ENCODE measurements at regions of chr9 and their contacts with region 1.

Region 1: GRCh38 chr9:18490635-18491370 is 16.9 kb downstream of the ADAMTSL1 start:
- DNase-seq: peak; percentile 96
- H3K4me3 ChIP-seq: peak overlapping the region in 2 of 3 experiments; percentile 8 to 25
- H3K27ac ChIP-seq: peak overlapping the region; percentile 96
- H3K4me1 ChIP-seq: peaks cover 50% of the 10 kb centered on the region
- H3K27me3 ChIP-seq: no peaks in the 10 kb centered on the region
- CTCF ChIP-seq: no peak
- POLR2A ChIP-seq: peak; percentile 31

Region 2: GRCh38 chr9:18238254-18238653 is 252.5 kb before region 1 on chr9:
- CTCF ChIA-PET with region 1: interaction called, 4 read pairs
- POLR2A ChIA-PET with region 1: no interaction called
- dilution Hi-C with region 1: no loop called
- intact Hi-C with region 1: loop called (anchors 1 kb)
- DNase-seq: peak; percentile 97
- H3K4me3 ChIP-seq: peak overlapping the region in 1 of 3 experiments; percentile 27
- H3K27ac ChIP-seq: peak overlapping the region; percentile 93
- H3K4me1 ChIP-seq: peaks cover 43% of the 10 kb centered on the region
- H3K27me3 ChIP-seq: no peaks in the 10 kb centered on the region
- CTCF ChIP-seq: no peak
- POLR2A ChIP-seq: no peak

Region 3: GRCh38 chr9:18331808-18332209 is 159.0 kb before region 1 on chr9:
- CTCF ChIA-PET with region 1: no interaction called
- POLR2A ChIA-PET with region 1: no interaction called
- dilution Hi-C with region 1: no loop called
- intact Hi-C with region 1: loop called (anchors 1 kb)
- DNase-seq: peak; percentile 99
- H3K4me3 ChIP-seq: no peak overlapping the region
- H3K27ac ChIP-seq: peak overlapping the region; percentile 85
- H3K4me1 ChIP-seq: peaks cover 40% of the 10 kb centered on the region
- H3K27me3 ChIP-seq: no peaks in the 10 kb centered on the region
- CTCF ChIP-seq: no peak
- POLR2A ChIP-seq: peak; percentile 57

Region 4: DNA sequence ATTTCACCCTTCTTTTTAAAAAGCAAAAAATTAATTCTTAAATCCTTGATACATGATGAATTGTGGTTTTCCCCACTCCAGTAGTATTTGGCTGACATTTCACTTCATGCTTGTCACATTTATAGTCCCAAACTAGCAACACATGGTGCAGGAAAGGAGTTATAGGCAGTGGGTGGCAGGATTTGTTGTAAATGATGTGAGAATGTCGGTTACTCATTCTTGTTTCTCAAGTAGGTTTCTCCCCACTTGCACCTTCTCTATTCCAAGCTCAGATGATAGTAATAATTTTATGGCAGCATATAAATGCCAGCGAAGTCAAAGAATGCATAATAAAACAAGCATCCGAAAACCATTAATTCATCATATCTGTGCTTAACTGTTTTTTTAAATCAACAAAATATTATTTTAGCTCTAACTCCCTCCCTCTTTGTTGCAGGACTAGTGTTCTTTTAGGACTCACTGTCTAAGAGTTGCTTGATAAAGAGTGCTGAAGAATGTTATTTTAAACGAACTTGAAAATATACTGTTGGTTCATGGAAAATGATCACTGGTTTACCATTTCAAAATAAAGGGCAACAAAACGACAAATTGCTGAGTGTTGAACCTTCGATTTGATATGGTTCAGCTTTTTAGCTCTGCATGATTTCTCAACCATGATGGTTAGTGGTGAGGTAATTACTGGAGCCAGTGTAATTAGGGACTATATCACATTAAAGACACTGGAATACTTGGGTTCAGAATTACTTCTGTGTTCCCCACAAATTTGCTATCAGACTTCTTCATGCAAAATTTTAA is 104.9 kb before region 1 on chr9:
- CTCF ChIA-PET with region 1: no interaction called
- POLR2A ChIA-PET with region 1: no interaction called
- dilution Hi-C with region 1: no loop called
- intact Hi-C with region 1: no loop called
- DNase-seq: no peak
- H3K4me3 ChIP-seq: no peak overlapping the region
- H3K27ac ChIP-seq: no peak overlapping the region
- H3K4me1 ChIP-seq: no peaks in the 10 kb centered on the region
- H3K27me3 ChIP-seq: no peaks in the 10 kb centered on the region
- CTCF ChIP-seq: no peak
- POLR2A ChIP-seq: no peak

Region 5: DNA sequence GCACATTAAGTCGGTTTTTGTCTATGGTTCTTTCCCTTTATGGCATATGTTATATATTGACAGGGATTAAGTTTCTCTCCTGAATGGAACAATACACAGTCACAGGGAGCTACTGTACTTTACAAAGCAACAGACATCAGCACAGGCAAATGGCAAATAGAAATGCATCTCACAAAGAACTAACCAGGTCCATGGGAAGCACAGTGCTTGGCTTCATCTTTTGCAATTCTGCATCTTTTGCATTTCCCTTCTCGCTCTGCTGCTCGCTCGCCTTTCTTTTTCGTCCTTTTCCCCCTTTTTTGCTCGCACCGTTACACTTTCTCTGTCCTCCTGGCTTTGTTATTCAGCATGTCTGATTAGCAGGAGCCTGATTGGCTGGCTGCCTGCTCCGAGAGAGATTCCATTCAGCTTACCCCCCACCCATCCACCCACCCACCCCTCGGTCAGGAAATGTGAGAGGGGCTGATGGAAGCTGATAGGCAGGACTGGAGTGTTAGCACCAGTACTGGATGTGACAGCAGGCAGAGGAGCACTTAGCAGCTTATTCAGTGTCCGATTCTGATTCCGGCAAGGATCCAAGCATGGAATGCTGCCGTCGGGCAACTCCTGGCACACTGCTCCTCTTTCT is 17.0 kb before region 1 on chr9 and contains the start of gene ADAMTSL1:
- CTCF ChIA-PET with region 1: interaction called, 10 read pairs
- POLR2A ChIA-PET with region 1: interaction called, 10 read pairs
- dilution Hi-C with region 1: no loop called
- intact Hi-C with region 1: loop called (anchors 2 kb)
- DNase-seq: peak; percentile 93
- H3K4me3 ChIP-seq: peak within 1 kb of the TSS; percentile 35 to 51 (median 38)
- H3K27ac ChIP-seq: peak within 1 kb of the TSS; percentile 48
- H3K4me1 ChIP-seq: peaks cover 37% of the 10 kb centered on the region
- H3K27me3 ChIP-seq: no peaks in the 10 kb centered on the region
- CTCF ChIP-seq: no peak
- POLR2A ChIP-seq: peak; percentile 33
- total RNA-seq, gene ADAMTSL1: 16.9 and 18.4 TPM in 2 replicates

Region 6: DNA sequence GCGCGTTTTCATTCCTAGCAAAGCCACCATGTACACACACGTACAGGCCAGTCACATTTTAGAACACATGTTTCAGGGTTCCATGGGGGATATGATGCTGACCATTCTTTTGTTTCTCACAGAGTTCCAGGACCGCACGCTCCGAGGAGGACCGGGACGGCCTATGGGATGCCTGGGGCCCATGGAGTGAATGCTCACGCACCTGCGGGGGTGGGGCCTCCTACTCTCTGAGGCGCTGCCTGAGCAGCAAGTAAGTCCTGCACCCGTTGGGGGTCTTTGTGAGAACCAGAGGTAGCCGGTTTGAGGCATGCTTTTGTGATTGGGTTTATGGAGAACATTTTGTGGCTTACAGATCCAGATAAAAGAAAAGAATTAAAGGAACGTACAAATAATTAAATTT is 13.9 kb after region 1 on chr9:
- CTCF ChIA-PET with region 1: no interaction called
- POLR2A ChIA-PET with region 1: no interaction called
- dilution Hi-C with region 1: no loop called
- intact Hi-C with region 1: no loop called
- DNase-seq: no peak
- H3K4me3 ChIP-seq: no peak overlapping the region
- H3K27ac ChIP-seq: no peak overlapping the region
- H3K4me1 ChIP-seq: no peaks in the 10 kb centered on the region
- H3K27me3 ChIP-seq: no peaks in the 10 kb centered on the region
- CTCF ChIP-seq: no peak
- POLR2A ChIP-seq: no peak

Region 7: DNA sequence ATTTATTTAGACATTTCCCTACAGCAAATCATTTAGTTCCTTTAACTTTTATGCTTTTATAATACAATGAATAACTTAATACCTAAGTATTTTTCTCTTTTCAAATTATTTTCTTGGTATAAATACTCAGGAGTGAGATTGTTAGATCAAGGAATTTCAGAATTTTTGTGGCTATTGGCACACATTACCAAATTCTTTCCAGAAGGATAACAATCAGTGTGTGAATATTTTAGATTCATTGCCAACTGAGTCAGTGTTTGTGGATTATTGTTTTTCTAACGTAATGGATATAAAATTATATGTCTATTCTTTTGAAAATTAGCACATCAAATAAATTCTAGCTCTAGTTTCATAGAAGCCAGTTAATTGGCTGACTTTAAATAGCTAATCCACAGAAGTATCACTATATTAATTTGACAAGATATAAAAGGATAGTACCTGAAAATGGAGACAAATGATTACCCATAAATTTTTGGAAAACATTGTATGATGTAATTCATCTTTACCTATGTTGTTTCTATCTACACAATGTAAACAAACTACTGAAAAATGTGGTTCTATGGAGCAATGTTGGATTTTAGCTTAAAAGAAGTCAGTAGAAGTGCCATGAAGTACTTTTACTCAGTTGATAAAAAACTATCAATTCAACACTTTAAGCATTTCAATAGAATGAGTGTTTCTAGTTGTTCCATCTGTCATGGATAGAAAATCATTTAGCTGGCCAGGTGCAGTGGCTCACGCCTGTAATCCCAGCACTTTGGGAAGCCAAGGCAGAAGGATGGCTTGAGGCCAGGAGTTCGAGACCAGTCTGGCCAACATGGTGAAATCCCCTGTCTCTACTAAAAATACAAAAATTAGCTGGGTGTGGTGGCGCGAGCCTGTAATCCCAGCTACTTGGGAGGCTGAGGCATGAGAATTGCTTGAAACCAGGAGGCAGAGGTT is 168.2 kb after region 1 on chr9:
- CTCF ChIA-PET with region 1: no interaction called
- POLR2A ChIA-PET with region 1: no interaction called
- dilution Hi-C with region 1: no loop called
- intact Hi-C with region 1: loop called (anchors 2 kb)
- DNase-seq: peak; percentile 71
- H3K4me3 ChIP-seq: no peak overlapping the region
- H3K27ac ChIP-seq: peak overlapping the region; percentile 57
- H3K4me1 ChIP-seq: peaks cover 12% of the 10 kb centered on the region
- H3K27me3 ChIP-seq: no peaks in the 10 kb centered on the region
- CTCF ChIP-seq: no peak
- POLR2A ChIP-seq: no peak

Region 8: GRCh38 chr9:19048966-19049916 is 558.4 kb after region 1 on chr9 and contains the start of gene RRAGA:
- CTCF ChIA-PET with region 1: no interaction called
- POLR2A ChIA-PET with region 1: no interaction called
- dilution Hi-C with region 1: no loop called
- intact Hi-C with region 1: loop called (anchors 10 kb)
- DNase-seq: peak; percentile 97
- H3K4me3 ChIP-seq: peak within 1 kb of the TSS; percentile 48 to 76 (median 53)
- H3K27ac ChIP-seq: peak within 1 kb of the TSS; percentile 69
- H3K4me1 ChIP-seq: peaks cover 16% of the 10 kb centered on the region
- H3K27me3 ChIP-seq: no peaks in the 10 kb centered on the region
- CTCF ChIP-seq: peak; percentile 81 to 91
- POLR2A ChIP-seq: peak; percentile 97
- total RNA-seq, gene RRAGA: 78.5 and 81.2 TPM in 2 replicates

Measured in endothelial cell of umbilical vein (primary cell).